Prostate gland (tissue), 2 donors: ENCODE measurements at regions of chr11 and their contacts with region 1.

Region 1: GRCh38 chr11:74388678-74389327 is 9.4 kb downstream of the PGM2L1 start:
- DNase-seq: peak; percentile 83
- H3K4me3 ChIP-seq: no peak overlapping the region
- H3K27ac ChIP-seq: no peak overlapping the region
- H3K4me1 ChIP-seq: no peaks in the 10 kb centered on the region
- H3K27me3 ChIP-seq: no peaks in the 10 kb centered on the region
- CTCF ChIP-seq: peak in 3 of 4 experiments; percentile 74 to 79 (median 78)
- POLR2A ChIP-seq: no peak

Region 2: GRCh38 chr11:74566146-74566960 is 177.6 kb after region 1 on chr11:
- intact Hi-C with region 1: loop called (anchors 5 kb)
- DNase-seq: no peak
- H3K4me3 ChIP-seq: no peak overlapping the region
- H3K27ac ChIP-seq: no peak overlapping the region
- H3K4me1 ChIP-seq: no peaks in the 10 kb centered on the region
- H3K27me3 ChIP-seq: no peaks in the 10 kb centered on the region
- CTCF ChIP-seq: no peak
- POLR2A ChIP-seq: no peak